ENCODE measurements at regions of chr12 and their contacts with region 1.

Region 1: GRCh38 chr12:94123127-94123526 is 25.2 kb upstream of the PLXNC1 start:
- DNase-seq: no peak
- H3K4me3 ChIP-seq: no peak overlapping the region
- H3K4me3 Mint-ChIP-seq: no peak overlapping the region
- H3K27ac Mint-ChIP-seq: no peak overlapping the region
- H3K4me1 ChIP-seq: no peaks in the 10 kb centered on the region
- H3K4me1 Mint-ChIP-seq: no peaks in the 10 kb centered on the region
- H3K27me3 ChIP-seq: no peaks in the 10 kb centered on the region
- H3K27me3 Mint-ChIP-seq: peaks cover 7% of the 10 kb centered on the region
- CTCF ChIP-seq: no peak

Region 2: GRCh38 chr12:94089891-94090290 is 33.2 kb before region 1 on chr12:
- CTCF ChIA-PET with region 1: no interaction called
- POLR2A ChIA-PET with region 1: interaction called, 10 read pairs
- intact Hi-C with region 1: no loop called
- DNase-seq: no peak
- H3K4me3 ChIP-seq: no peak overlapping the region
- H3K4me3 Mint-ChIP-seq: no peak overlapping the region
- H3K27ac Mint-ChIP-seq: no peak overlapping the region
- H3K4me1 ChIP-seq: no peaks in the 10 kb centered on the region
- H3K4me1 Mint-ChIP-seq: no peaks in the 10 kb centered on the region
- H3K27me3 ChIP-seq: no peaks in the 10 kb centered on the region
- H3K27me3 Mint-ChIP-seq: no peaks in the 10 kb centered on the region
- CTCF ChIP-seq: no peak

Region 3: GRCh38 chr12:94173660-94174265 is 50.6 kb after region 1 on chr12:
- CTCF ChIA-PET with region 1: no interaction called
- POLR2A ChIA-PET with region 1: no interaction called
- intact Hi-C with region 1: no loop called
- DNase-seq: no peak
- H3K4me3 ChIP-seq: no peak overlapping the region
- H3K4me3 Mint-ChIP-seq: peak overlapping the region; percentile 70
- H3K27ac Mint-ChIP-seq: peak overlapping the region; percentile 88
- H3K4me1 ChIP-seq: peaks cover 62% of the 10 kb centered on the region
- H3K4me1 Mint-ChIP-seq: peaks cover 51% of the 10 kb centered on the region
- H3K27me3 ChIP-seq: no peaks in the 10 kb centered on the region
- H3K27me3 Mint-ChIP-seq: no peaks in the 10 kb centered on the region
- CTCF ChIP-seq: no peak

Measured in Caco-2 (cell line).